Naive thymus-derived CD4-positive, alpha-beta T cell (primary cell): ENCODE measurements at regions of chr3 and their contacts with region 1.

Region 1: GRCh38 chr3:52291508-52292181 is 4.0 kb downstream of the GLYCTK start:
- DNase-seq: peak in 6 of 9 donors; percentile 42 to 59 (median 49)
- ATAC-seq: peak; percentile 21
- H3K4me3 ChIP-seq: no peak overlapping the region
- H3K4me3 Mint-ChIP-seq: peak overlapping the region in 8 of 10 donors; percentile 1 to 84 (median 30)
- H3K27ac ChIP-seq: no peak overlapping the region
- H3K27ac Mint-ChIP-seq: peak overlapping the region in 4 of 9 donors; percentile 11 to 86 (median 72)
- H3K4me1 ChIP-seq: peaks cover 10 to 22% of the 10 kb centered on the region in 2 donors
- H3K4me1 Mint-ChIP-seq: peaks cover 19 to 36% (median 30%) of the 10 kb centered on the region in 7 donors
- H3K27me3 ChIP-seq: no peaks in the 10 kb centered on the region
- H3K27me3 Mint-ChIP-seq: peaks cover 0 to 3% (median 0%) of the 10 kb centered on the region in 5 donors

Region 2: DNA sequence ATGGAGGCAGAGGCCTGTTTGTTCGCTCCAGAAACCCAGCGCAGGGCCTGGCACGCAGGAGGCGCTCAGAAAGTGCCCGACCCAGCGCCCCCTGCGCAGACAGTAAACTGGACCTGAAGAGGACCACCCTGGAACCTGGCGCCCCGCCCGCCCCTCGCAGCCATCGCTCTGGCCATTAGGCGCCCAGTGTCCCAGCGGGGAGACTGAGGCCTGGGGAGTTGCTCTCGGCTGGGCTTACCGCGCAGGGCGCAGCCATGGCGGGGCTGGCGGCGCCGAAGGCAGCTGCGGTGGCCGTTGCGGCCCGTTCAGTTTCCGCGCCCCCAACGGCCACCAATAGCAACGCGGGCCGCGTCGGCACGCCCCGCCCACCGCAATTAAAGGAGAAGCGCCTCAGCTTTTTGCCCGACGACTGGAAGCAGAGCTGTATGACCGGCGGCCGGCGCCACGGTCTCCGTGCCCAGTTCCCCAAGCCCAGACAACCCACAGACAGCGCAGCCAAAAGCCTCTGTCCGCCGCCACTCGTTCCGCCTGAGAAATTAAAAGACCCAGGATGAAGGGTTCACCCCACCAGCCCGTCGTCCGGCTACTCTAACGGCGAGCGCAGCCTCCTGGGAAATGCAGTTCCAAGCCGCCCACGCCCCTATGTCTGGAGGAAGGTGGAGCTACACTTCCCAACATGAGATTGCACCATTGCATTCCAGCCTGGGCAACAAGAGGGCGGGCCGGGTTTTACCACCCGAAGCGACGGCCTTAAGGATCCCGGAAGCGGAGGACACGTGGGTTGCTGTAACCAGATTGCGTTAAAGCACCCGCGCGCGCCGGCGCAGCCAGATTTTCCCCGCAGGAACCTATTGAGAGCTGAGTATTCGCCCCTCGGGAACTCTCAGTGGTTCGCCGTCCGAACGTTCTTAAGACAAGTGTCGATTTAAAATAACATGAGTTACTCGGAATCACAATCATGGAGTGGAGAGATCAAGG is 137.2 kb before region 1 on chr3 and contains the start of gene POC1A:
- CTCF ChIA-PET with region 1: no interaction called
- POLR2A ChIA-PET with region 1: interaction called, 5 read pairs
- intact Hi-C with region 1: loop called in 1 of 2 experiments (anchors 2 kb)
- DNase-seq: peak; percentile 73 to 90 (median 82)
- ATAC-seq: peak; percentile 92
- H3K4me3 ChIP-seq: peak within 1 kb of the TSS; percentile 98
- H3K4me3 Mint-ChIP-seq: peak within 1 kb of the TSS; percentile 88 to 98 (median 96)
- H3K27ac ChIP-seq: peak within 1 kb of the TSS; percentile 85
- H3K27ac Mint-ChIP-seq: peak within 1 kb of the TSS; percentile 87 to 98 (median 94)
- H3K4me1 ChIP-seq: peaks cover 4 to 6% of the 10 kb centered on the region in 2 donors
- H3K4me1 Mint-ChIP-seq: peaks cover 5 to 22% (median 6%) of the 10 kb centered on the region in 7 donors
- H3K27me3 ChIP-seq: no peaks in the 10 kb centered on the region
- H3K27me3 Mint-ChIP-seq: peaks cover 0 to 1% (median 0%) of the 10 kb centered on the region in 5 donors
- total RNA-seq, gene POC1A: 0.58 to 19.7 (median 1.2) TPM

Region 3: GRCh38 chr3:52253314-52254304 is 38.0 kb before region 1 on chr3:
- CTCF ChIA-PET with region 1: no interaction called
- POLR2A ChIA-PET with region 1: interaction called, 1,418 read pairs
- intact Hi-C with region 1: loop called in 1 of 2 experiments (anchors 1 kb)
- DNase-seq: peak in 8 of 9 donors; percentile 81 to 95 (median 94)
- ATAC-seq: peak; percentile 95
- H3K4me3 ChIP-seq: peak overlapping the region; percentile 38
- H3K4me3 Mint-ChIP-seq: peak overlapping the region; percentile 82 to 97 (median 86)
- H3K27ac ChIP-seq: peak overlapping the region; percentile 87
- H3K27ac Mint-ChIP-seq: peak overlapping the region; percentile 92 to 100 (median 98)
- H3K4me1 ChIP-seq: peaks cover 55 to 91% of the 10 kb centered on the region in 2 donors
- H3K4me1 Mint-ChIP-seq: peaks cover 46 to 99% (median 92%) of the 10 kb centered on the region in 7 donors
- H3K27me3 ChIP-seq: no peaks in the 10 kb centered on the region
- H3K27me3 Mint-ChIP-seq: peaks cover 0 to 4% (median 0%) of the 10 kb centered on the region in 5 donors

Region 4: GRCh38 chr3:52270252-52270754 is 21.3 kb before region 1 on chr3:
- CTCF ChIA-PET with region 1: interaction called, 4 read pairs
- POLR2A ChIA-PET with region 1: interaction called, 112 read pairs
- intact Hi-C with region 1: loop called in 1 of 2 experiments (anchors 2 kb)
- DNase-seq: no peak
- ATAC-seq: peak; percentile 28
- H3K4me3 ChIP-seq: peak overlapping the region; percentile 57
- H3K4me3 Mint-ChIP-seq: peak overlapping the region; percentile 68 to 99 (median 90)
- H3K27ac ChIP-seq: peak overlapping the region; percentile 96
- H3K27ac Mint-ChIP-seq: peak overlapping the region; percentile 79 to 99 (median 96)
- H3K4me1 ChIP-seq: peaks cover 42 to 67% of the 10 kb centered on the region in 2 donors
- H3K4me1 Mint-ChIP-seq: peaks cover 55 to 92% (median 87%) of the 10 kb centered on the region in 7 donors
- H3K27me3 ChIP-seq: no peaks in the 10 kb centered on the region
- H3K27me3 Mint-ChIP-seq: no peaks in the 10 kb centered on the region

Region 5: DNA sequence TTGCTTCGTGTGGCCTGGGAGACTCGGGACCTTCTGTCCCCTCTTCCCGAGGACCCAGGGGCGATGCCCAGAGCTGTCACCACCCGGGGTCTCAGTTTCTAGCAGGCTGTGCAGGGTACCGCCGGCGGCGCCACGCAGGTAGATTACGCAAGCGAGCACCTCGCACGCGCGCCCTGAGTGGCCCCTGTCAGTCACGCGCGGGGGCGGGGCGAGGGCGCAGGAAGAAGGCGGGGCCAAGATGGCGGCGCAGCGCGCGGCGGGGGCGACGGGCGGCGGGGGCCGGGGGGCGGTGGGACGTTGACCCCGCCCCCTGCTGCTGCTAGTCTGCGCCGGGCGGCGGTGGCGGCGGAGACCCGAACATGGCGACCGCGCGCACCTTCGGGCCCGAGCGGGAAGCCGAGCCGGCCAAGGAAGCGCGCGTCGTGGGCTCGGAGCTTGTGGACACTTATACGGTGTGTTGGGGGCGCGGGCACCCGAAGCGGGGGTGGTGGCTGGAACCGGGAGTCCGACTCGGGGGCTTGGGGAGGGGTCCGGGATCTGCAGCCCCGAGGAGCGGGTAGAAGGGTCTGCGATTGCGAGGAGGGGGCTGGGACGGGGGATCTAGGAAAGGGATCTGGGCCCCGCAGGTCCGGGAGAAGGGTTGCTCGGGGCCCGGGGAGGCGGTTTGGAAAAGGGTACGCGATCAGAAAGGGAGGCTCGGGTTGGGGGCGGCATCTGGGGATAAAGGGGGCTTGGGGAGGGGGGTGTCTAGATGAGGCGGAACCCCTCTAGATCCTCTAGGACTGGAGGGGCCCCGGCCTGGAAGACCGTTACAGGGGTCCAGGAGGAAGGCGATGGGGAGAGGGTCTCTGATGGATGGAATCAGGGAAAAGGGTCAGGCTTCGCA is 163.9 kb after region 1 on chr3 and contains the start of gene NISCH:
- CTCF ChIA-PET with region 1: no interaction called
- POLR2A ChIA-PET with region 1: interaction called, 4 read pairs
- intact Hi-C with region 1: loop called in 1 of 2 experiments (anchors 2 kb)
- DNase-seq: peak; percentile 92 to 99 (median 97)
- ATAC-seq: peak; percentile 98
- H3K4me3 ChIP-seq: peak within 1 kb of the TSS; percentile 98
- H3K4me3 Mint-ChIP-seq: peak within 1 kb of the TSS; percentile 87 to 96 (median 93)
- H3K27ac ChIP-seq: peak within 1 kb of the TSS; percentile 88
- H3K27ac Mint-ChIP-seq: peak within 1 kb of the TSS; percentile 96 to 100 (median 99)
- H3K4me1 ChIP-seq: peaks cover 15 to 23% of the 10 kb centered on the region in 2 donors
- H3K4me1 Mint-ChIP-seq: peaks cover 25 to 47% (median 41%) of the 10 kb centered on the region in 7 donors
- H3K27me3 ChIP-seq: no peaks in the 10 kb centered on the region
- H3K27me3 Mint-ChIP-seq: no peaks in the 10 kb centered on the region
- total RNA-seq, gene NISCH: 86.8 to 210 (median 162) TPM